ENCODE measurements at regions of chr11 and their contacts with region 1.

Region 1: DNA sequence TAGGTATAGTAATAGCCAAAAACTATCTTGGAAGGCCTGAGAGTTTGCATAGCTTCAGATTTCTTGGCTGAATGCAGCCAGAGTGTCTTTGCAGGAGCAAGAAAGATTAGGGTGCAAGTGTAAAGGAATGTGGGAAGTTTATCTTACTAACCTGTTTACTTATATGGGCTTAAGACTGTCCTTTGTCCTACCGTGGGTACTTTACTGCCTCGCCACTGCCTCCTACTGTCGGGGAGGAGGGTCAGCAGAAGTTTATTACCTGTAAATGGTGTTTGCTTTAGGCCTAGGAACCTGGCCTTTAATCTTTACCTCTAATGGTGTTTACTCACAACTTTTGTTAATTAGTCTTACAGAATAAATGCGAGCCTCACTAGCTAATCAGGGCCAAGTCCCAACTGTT is 633.8 kb downstream of the DLG2 start:
- DNase-seq: peak; percentile 1
- ATAC-seq: peak; percentile 64; the same call in 2 of the 3 replicates
- H3K4me3 ChIP-seq: no peak overlapping the region
- H3K27ac ChIP-seq: no peak overlapping the region
- H3K4me1 ChIP-seq: no peaks in the 10 kb centered on the region
- H3K27me3 ChIP-seq: no peaks in the 10 kb centered on the region
- CTCF ChIP-seq: peak; percentile 40
- EP300 ChIP-seq: no peak
- POLR2A ChIP-seq: no peak
- RAD21 ChIP-seq: no peak

Region 2: GRCh38 chr11:84780689-84781293 is 212.6 kb before region 1 on chr11:
- CTCF ChIA-PET with region 1: no interaction called
- POLR2A ChIA-PET with region 1: no interaction called
- in situ Hi-C with region 1: no loop called
- intact Hi-C with region 1: loop called (anchors 5 kb)
- DNase-seq: peak; percentile 6
- ATAC-seq: peak; percentile 41; the same call in 1 of the 3 replicates
- H3K4me3 ChIP-seq: no peak overlapping the region
- H3K27ac ChIP-seq: no peak overlapping the region
- H3K4me1 ChIP-seq: no peaks in the 10 kb centered on the region
- H3K27me3 ChIP-seq: no peaks in the 10 kb centered on the region
- CTCF ChIP-seq: peak; percentile 36; the same call in 1 of the 2 replicates
- EP300 ChIP-seq: no peak
- POLR2A ChIP-seq: no peak
- RAD21 ChIP-seq: no peak

Region 3: DNA sequence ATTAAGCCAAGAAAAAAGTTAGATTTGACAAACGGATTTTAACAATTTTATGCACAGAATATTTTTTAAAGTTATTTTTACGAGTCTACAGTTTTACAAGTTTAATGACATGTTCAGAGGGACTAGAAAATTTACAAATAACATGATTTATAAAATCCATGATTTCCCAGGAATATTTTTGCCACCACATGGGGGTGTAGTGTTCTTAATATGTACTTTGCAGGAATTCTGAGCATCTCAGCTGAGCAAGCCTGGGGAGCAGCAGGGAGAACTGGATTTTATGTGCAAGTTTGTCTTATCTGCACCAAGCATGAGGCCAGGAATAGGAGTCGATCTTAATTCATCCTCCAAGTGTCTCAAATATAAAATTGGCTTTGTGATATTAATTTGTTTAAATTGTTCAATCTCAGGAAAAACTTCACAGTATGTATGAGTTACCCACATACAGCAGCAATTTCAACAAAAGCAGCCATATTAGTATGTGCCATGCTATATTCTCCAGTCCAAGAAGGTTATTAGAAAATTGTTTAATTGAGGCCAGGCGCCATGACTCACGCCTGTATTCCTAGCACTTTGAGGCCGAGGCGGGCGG is 192.5 kb before region 1 on chr11:
- CTCF ChIA-PET with region 1: no interaction called
- POLR2A ChIA-PET with region 1: no interaction called
- in situ Hi-C with region 1: no loop called
- intact Hi-C with region 1: loop called (anchors 5 kb)
- DNase-seq: peak; percentile 13
- ATAC-seq: peak; percentile 61; the same call in 2 of the 3 replicates
- H3K4me3 ChIP-seq: no peak overlapping the region
- H3K27ac ChIP-seq: no peak overlapping the region
- H3K4me1 ChIP-seq: no peaks in the 10 kb centered on the region
- H3K27me3 ChIP-seq: no peaks in the 10 kb centered on the region
- CTCF ChIP-seq: 0 out of 2 replicates have a peak, but pooled peaks have one; percentile 11
- EP300 ChIP-seq: no peak
- POLR2A ChIP-seq: no peak
- RAD21 ChIP-seq: no peak

Region 4: GRCh38 chr11:84899740-84900139 is 93.6 kb before region 1 on chr11:
- CTCF ChIA-PET with region 1: no interaction called
- POLR2A ChIA-PET with region 1: no interaction called
- in situ Hi-C with region 1: no loop called
- intact Hi-C with region 1: no loop called
- DNase-seq: peak; percentile 10
- ATAC-seq: peak; percentile 75
- H3K4me3 ChIP-seq: no peak overlapping the region
- H3K27ac ChIP-seq: no peak overlapping the region
- H3K4me1 ChIP-seq: no peaks in the 10 kb centered on the region
- H3K27me3 ChIP-seq: no peaks in the 10 kb centered on the region; a peak in 1 of 5 replicates
- CTCF ChIP-seq: no peak
- EP300 ChIP-seq: no peak
- POLR2A ChIP-seq: no peak
- RAD21 ChIP-seq: no peak

Region 5: GRCh38 chr11:85044911-85045310 is 51.5 kb after region 1 on chr11:
- CTCF ChIA-PET with region 1: no interaction called
- POLR2A ChIA-PET with region 1: no interaction called
- in situ Hi-C with region 1: no loop called
- intact Hi-C with region 1: no loop called
- DNase-seq: no peak
- ATAC-seq: no peak
- H3K4me3 ChIP-seq: no peak overlapping the region
- H3K27ac ChIP-seq: no peak overlapping the region
- H3K4me1 ChIP-seq: no peaks in the 10 kb centered on the region
- H3K27me3 ChIP-seq: no peaks in the 10 kb centered on the region
- CTCF ChIP-seq: no peak
- EP300 ChIP-seq: no peak
- POLR2A ChIP-seq: no peak
- RAD21 ChIP-seq: no peak